ENCODE measurements at regions of chr19 and their contacts with region 1.

Region 1: DNA sequence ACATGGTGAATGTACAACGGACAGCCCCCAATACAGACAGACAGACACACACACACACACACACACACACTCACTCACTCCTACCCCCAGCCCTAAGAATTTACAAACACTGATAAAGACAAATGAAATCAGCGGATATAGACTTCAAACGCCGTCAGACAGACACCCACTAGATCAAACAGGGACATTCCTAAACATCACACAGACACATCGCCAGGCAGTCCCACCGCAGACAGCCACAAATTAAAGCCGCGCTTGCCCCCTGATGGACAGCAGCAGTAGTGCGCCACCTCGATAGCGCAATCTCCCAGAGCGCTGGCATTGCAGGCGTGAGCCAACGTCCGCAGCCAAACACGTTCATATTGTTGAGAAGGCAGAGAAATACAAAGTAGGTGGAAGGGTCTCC is 24.7 kb upstream of the ADGRE1 start:
- DNase-seq: peak; percentile 73 to 91 (median 88)
- ATAC-seq: peak; percentile 94
- H3K4me3 ChIP-seq: peak overlapping the region; percentile 12
- H3K4me3 Mint-ChIP-seq: peak overlapping the region; percentile 81 to 92 (median 86)
- H3K27ac ChIP-seq: peak overlapping the region; percentile 23
- H3K27ac Mint-ChIP-seq: peak overlapping the region; percentile 56 to 92 (median 82)
- H3K4me1 ChIP-seq: peaks cover 0 to 3% of the 10 kb centered on the region in 2 donors
- H3K4me1 Mint-ChIP-seq: peaks cover 17 to 39% (median 28%) of the 10 kb centered on the region in 7 donors
- H3K27me3 ChIP-seq: no peaks in the 10 kb centered on the region
- H3K27me3 Mint-ChIP-seq: no peaks in the 10 kb centered on the region

Region 2: DNA sequence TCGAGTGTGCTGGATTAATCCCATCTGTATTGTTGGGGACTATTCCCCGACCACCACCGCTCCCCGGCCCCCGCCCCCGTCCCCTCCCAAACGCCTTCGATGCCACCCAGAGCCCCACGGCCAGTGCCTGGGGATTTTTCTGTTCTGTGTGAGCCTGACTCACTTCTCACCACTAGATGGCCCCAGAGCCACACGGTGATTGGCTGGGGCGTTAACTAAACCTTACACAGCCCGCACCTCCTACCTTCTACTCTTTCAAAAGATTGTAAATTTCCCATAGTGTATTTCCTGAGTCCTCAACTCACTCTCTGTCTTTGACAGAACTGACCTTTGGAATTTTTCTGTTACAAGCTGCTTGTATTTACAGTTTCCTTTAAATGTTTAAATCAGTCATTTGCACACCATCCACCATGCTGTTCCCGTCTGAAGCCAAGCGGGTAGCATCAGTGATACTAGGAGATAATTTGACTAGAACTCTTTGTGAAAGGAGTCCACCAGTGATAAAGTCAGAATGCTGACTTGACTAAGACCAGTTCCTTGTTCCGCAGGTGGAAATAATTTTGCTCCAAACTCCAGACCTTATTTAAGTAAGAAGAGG is 813.8 kb before region 1 on chr19:
- CTCF ChIA-PET with region 1: no interaction called
- POLR2A ChIA-PET with region 1: no interaction called
- intact Hi-C with region 1: loop called in 1 of 2 experiments (anchors 2 kb)
- DNase-seq: peak; percentile 56 to 81 (median 74)
- ATAC-seq: peak; percentile 100
- H3K4me3 ChIP-seq: no peak overlapping the region
- H3K4me3 Mint-ChIP-seq: no peak overlapping the region
- H3K27ac ChIP-seq: no peak overlapping the region
- H3K27ac Mint-ChIP-seq: no peak overlapping the region
- H3K4me1 ChIP-seq: no peaks in the 10 kb centered on the region
- H3K4me1 Mint-ChIP-seq: peaks cover 0 to 5% (median 4%) of the 10 kb centered on the region in 7 donors
- H3K27me3 ChIP-seq: no peaks in the 10 kb centered on the region
- H3K27me3 Mint-ChIP-seq: peaks cover 0 to 11% (median 0%) of the 10 kb centered on the region in 5 donors

Region 3: DNA sequence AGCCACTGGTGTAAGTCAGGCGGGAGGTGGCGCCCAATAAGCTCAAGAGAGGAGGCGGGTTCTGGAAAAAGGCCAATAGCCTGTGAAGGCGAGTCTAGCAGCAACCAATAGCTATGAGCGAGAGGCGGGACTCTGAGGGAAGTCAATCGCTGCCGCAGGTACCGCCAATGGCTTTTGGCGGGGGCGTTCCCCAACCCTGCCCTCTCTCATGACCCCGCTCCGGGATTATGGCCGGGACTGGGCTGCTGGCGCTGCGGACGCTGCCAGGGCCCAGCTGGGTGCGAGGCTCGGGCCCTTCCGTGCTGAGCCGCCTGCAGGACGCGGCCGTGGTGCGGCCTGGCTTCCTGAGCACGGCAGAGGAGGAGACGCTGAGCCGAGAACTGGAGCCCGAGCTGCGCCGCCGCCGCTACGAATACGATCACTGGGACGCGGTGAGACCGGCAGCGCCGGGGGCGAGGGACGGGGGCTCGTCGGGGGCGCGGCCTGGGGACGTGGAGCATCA is 490.0 kb before region 1 on chr19 and contains the start of gene ALKBH7:
- CTCF ChIA-PET with region 1: no interaction called
- POLR2A ChIA-PET with region 1: no interaction called
- intact Hi-C with region 1: loop called in 1 of 2 experiments (anchors 1 kb)
- DNase-seq: peak; percentile 82 to 99 (median 98)
- ATAC-seq: peak; percentile 83
- H3K4me3 ChIP-seq: peak within 1 kb of the TSS; percentile 89
- H3K4me3 Mint-ChIP-seq: peak within 1 kb of the TSS; percentile 82 to 92 (median 88)
- H3K27ac ChIP-seq: peak within 1 kb of the TSS; percentile 88
- H3K27ac Mint-ChIP-seq: peak within 1 kb of the TSS; percentile 66 to 95 (median 92)
- H3K4me1 ChIP-seq: peaks cover 5 to 10% of the 10 kb centered on the region in 2 donors
- H3K4me1 Mint-ChIP-seq: peaks cover 9 to 23% (median 13%) of the 10 kb centered on the region in 7 donors
- H3K27me3 ChIP-seq: no peaks in the 10 kb centered on the region
- H3K27me3 Mint-ChIP-seq: no peaks in the 10 kb centered on the region
- total RNA-seq, gene ALKBH7: 33.6 to 90.1 (median 72.9) TPM

Region 4: GRCh38 chr19:6516659-6517291 is 345.9 kb before region 1 on chr19:
- CTCF ChIA-PET with region 1: interaction called, 11 read pairs
- POLR2A ChIA-PET with region 1: interaction called, 13 read pairs
- intact Hi-C with region 1: loop called (anchors 1 kb)
- DNase-seq: peak; percentile 72 to 96 (median 85)
- ATAC-seq: peak; percentile 91
- H3K4me3 ChIP-seq: peak overlapping the region; percentile 68
- H3K4me3 Mint-ChIP-seq: peak overlapping the region; percentile 81 to 100 (median 96)
- H3K27ac ChIP-seq: peak overlapping the region; percentile 49
- H3K27ac Mint-ChIP-seq: peak overlapping the region; percentile 22 to 90 (median 69)
- H3K4me1 ChIP-seq: peaks cover 8 to 20% of the 10 kb centered on the region in 2 donors
- H3K4me1 Mint-ChIP-seq: peaks cover 22 to 35% (median 33%) of the 10 kb centered on the region in 7 donors
- H3K27me3 ChIP-seq: no peaks in the 10 kb centered on the region
- H3K27me3 Mint-ChIP-seq: peaks cover 0 to 2% (median 0%) of the 10 kb centered on the region in 5 donors

Region 5: GRCh38 chr19:6730153-6730825 is 132.4 kb before region 1 on chr19:
- CTCF ChIA-PET with region 1: no interaction called
- POLR2A ChIA-PET with region 1: no interaction called
- intact Hi-C with region 1: no loop called
- DNase-seq: peak in 1 of 9 donors; percentile 48
- ATAC-seq: peak; percentile 54
- H3K4me3 ChIP-seq: no peak overlapping the region
- H3K4me3 Mint-ChIP-seq: no peak overlapping the region
- H3K27ac ChIP-seq: no peak overlapping the region
- H3K27ac Mint-ChIP-seq: no peak overlapping the region
- H3K4me1 ChIP-seq: no peaks in the 10 kb centered on the region
- H3K4me1 Mint-ChIP-seq: peaks cover 0 to 19% (median 4%) of the 10 kb centered on the region in 7 donors
- H3K27me3 ChIP-seq: no peaks in the 10 kb centered on the region
- H3K27me3 Mint-ChIP-seq: no peaks in the 10 kb centered on the region

Region 6: DNA sequence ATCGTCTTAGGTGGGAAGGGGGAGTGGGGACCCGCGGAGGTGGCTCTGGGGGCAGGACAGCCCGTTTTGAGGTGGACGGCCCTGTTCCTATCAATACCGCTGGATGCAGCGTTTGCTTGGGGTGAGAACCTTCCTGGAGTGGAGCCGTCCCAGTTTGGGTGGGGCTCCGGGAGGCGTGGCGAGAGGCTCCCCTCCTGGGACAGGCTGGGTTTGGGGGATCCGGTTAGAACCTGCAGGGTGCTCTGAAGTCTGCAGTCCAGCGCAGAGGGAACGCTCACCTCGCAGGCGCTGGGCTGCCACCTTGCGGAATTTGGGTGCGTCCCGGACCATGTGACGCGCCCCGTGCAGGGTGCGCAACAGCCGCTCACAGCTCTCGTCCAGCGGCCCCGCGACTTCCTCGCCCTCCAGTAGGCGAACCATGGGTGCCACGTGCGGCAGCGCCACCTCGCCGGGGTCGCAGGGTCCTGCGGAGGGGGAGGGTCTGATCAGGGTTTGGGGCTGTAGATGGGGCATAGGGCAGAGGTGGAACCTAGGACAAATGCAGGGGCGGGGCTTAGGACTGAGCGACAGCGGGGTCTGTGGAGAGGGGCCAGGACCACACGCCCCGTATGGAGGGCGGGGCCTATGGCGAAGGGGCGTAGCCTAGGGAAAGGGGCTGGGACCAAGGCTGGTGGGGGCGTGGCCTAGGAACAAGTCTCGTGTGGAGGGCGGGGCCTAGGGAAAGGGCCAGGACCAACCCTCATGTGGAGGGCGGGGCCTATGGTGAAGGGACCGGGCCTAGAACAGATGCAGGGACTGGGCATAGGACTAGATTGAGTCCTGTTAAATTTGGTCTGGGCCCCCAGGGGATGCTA is 109.3 kb before region 1 on chr19:
- CTCF ChIA-PET with region 1: no interaction called
- POLR2A ChIA-PET with region 1: no interaction called
- intact Hi-C with region 1: loop called in 1 of 2 experiments (anchors 1 kb)
- DNase-seq: peak; percentile 64 to 86 (median 75)
- ATAC-seq: peak; percentile 96
- H3K4me3 ChIP-seq: peak overlapping the region; percentile 64
- H3K4me3 Mint-ChIP-seq: peak overlapping the region; percentile 64 to 89 (median 74)
- H3K27ac ChIP-seq: peak overlapping the region; percentile 48
- H3K27ac Mint-ChIP-seq: peak overlapping the region; percentile 41 to 93 (median 88)
- H3K4me1 ChIP-seq: no peaks in the 10 kb centered on the region
- H3K4me1 Mint-ChIP-seq: peaks cover 5 to 14% (median 11%) of the 10 kb centered on the region in 7 donors
- H3K27me3 ChIP-seq: no peaks in the 10 kb centered on the region
- H3K27me3 Mint-ChIP-seq: no peaks in the 10 kb centered on the region

Region 7: DNA sequence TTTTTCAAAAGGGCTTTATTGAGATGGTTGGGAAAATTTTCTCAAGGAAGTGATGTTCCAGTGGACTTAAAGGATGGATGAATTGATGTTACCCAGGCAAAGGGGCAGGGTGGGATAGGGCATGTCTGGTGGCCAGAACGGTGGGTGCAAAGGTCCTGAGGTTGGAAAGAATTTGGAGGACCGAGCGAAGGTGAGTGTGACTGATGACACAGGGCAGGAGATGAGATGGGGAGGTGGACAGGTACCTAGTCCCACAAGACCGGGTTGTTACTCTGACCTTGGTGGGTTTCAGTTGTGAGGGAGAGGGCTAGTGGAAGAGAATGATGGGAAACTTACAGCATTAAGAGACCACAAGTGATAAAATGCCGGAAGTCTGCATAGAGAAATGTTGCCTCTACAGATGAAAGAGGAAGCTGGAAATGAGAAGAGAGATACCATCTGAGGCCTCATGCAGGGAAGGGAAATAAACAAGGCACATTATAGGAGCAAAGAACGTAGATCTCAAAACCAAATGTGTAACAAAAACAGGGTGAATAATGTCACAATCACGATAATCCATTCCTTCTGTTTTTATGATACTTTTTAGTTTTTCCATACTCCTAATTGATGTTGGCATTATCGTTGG is 29.2 kb after region 1 on chr19:
- CTCF ChIA-PET with region 1: interaction called, 25 read pairs
- POLR2A ChIA-PET with region 1: interaction called, 58 read pairs
- intact Hi-C with region 1: loop called (anchors 1 to 2 kb)
- DNase-seq: peak in 7 of 9 donors; percentile 28 to 75 (median 64)
- ATAC-seq: peak; percentile 74
- H3K4me3 ChIP-seq: peak overlapping the region; percentile 7
- H3K4me3 Mint-ChIP-seq: peak overlapping the region; percentile 54 to 89 (median 72)
- H3K27ac ChIP-seq: peak overlapping the region; percentile 65
- H3K27ac Mint-ChIP-seq: peak overlapping the region; percentile 85 to 97 (median 94)
- H3K4me1 ChIP-seq: peaks cover 31 to 77% of the 10 kb centered on the region in 2 donors
- H3K4me1 Mint-ChIP-seq: peaks cover 61 to 100% (median 93%) of the 10 kb centered on the region in 7 donors
- H3K27me3 ChIP-seq: no peaks in the 10 kb centered on the region
- H3K27me3 Mint-ChIP-seq: no peaks in the 10 kb centered on the region

Region 8: DNA sequence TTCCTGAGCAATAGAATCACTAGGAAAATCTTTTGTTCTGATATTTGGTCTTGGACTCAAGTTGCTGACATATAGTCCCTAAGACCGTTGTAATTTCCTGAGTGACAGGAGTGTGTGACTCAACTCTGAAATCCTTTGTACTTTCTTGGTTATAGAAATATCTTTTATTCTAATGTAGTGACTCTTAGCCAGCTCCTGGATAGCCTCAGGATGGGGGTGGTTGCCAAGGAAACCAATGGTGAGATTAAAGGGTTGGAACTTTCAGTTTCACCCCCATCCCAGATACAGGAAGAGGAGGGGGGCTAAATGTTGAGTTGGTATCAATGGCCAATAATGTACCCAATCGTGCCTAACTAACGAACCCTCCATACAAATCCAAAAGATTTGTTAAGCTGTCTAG is 116.7 kb after region 1 on chr19:
- CTCF ChIA-PET with region 1: no interaction called
- POLR2A ChIA-PET with region 1: no interaction called
- intact Hi-C with region 1: no loop called
- DNase-seq: no peak
- ATAC-seq: no peak
- H3K4me3 ChIP-seq: no peak overlapping the region
- H3K4me3 Mint-ChIP-seq: no peak overlapping the region
- H3K27ac ChIP-seq: no peak overlapping the region
- H3K27ac Mint-ChIP-seq: peak overlapping the region in 1 of 9 donors; percentile 19
- H3K4me1 ChIP-seq: no peaks in the 10 kb centered on the region
- H3K4me1 Mint-ChIP-seq: no peaks in the 10 kb centered on the region
- H3K27me3 ChIP-seq: no peaks in the 10 kb centered on the region
- H3K27me3 Mint-ChIP-seq: no peaks in the 10 kb centered on the region

Region 9: DNA sequence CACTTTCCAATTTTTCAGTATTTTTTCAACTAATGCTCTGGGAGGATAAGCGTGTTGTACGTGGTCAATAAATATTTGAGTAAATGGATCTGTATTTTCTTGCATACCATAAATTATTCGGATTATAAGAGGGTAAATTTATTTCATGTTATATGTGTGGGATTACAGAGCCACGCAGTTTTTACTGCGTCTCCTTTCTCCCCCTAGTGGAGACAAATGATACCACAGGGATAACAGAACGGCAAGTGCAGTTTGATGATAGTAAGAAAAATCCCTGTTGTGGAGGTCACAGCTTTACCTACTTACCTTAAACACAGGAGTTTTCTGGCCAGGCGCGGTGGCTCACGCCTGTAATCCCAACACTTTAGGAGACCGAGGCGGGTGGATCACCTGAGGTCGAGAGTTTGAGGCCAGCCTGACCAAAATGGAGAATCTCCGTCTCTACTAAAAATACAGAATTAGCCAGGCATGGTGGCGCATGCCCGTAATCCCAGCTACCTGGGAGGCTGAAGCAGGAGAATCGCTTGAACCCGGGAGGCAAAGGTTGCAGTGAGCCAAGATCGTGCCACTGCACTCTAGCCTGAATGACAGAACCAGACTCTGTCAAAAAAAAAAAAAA is 141.7 kb after region 1 on chr19:
- CTCF ChIA-PET with region 1: interaction called, 5 read pairs
- POLR2A ChIA-PET with region 1: no interaction called
- intact Hi-C with region 1: loop called (anchors 1 kb)
- DNase-seq: peak in 5 of 9 donors; percentile 14 to 55 (median 54)
- ATAC-seq: peak; percentile 67
- H3K4me3 ChIP-seq: no peak overlapping the region
- H3K4me3 Mint-ChIP-seq: peak overlapping the region in 4 of 10 donors; percentile 26 to 45 (median 28)
- H3K27ac ChIP-seq: no peak overlapping the region
- H3K27ac Mint-ChIP-seq: no peak overlapping the region
- H3K4me1 ChIP-seq: peaks cover 11 to 18% of the 10 kb centered on the region in 2 donors
- H3K4me1 Mint-ChIP-seq: peaks cover 20 to 65% (median 40%) of the 10 kb centered on the region in 7 donors
- H3K27me3 ChIP-seq: no peaks in the 10 kb centered on the region
- H3K27me3 Mint-ChIP-seq: peaks cover 0 to 2% (median 0%) of the 10 kb centered on the region in 5 donors

Measured in naive thymus-derived CD4-positive, alpha-beta T cell (primary cell).